ENCODE measurements at regions of chr11 and their contacts with region 1.

Region 1: GRCh38 chr11:116471608-116472256 is 301.1 kb downstream of the BUD13 start:
- DNase-seq: no peak
- H3K4me3 ChIP-seq: no peak overlapping the region
- H3K27ac ChIP-seq: no peak overlapping the region
- H3K4me1 ChIP-seq: peaks cover 2 to 8% (median 7%) of the 10 kb centered on the region in 4 experiments; a peak in 5 of 7 replicates
- H3K27me3 ChIP-seq: no peaks in the 10 kb centered on the region; a peak in 1 of 7 replicates
- CTCF ChIP-seq: no peak
- EP300 ChIP-seq: no peak
- POLR2A ChIP-seq: no peak
- RAD21 ChIP-seq: no peak

Region 2: GRCh38 chr11:116420770-116421528 is 50.8 kb before region 1 on chr11:
- CTCF ChIA-PET with region 1: no interaction called
- POLR2A ChIA-PET with region 1: no interaction called
- DNase-seq: no peak
- H3K4me3 ChIP-seq: no peak overlapping the region
- H3K27ac ChIP-seq: no peak overlapping the region
- H3K4me1 ChIP-seq: peaks cover 1 to 16% (median 7%) of the 10 kb centered on the region in 4 experiments; a peak in 5 of 7 replicates
- H3K27me3 ChIP-seq: no peaks in the 10 kb centered on the region
- CTCF ChIP-seq: no peak
- EP300 ChIP-seq: no peak
- POLR2A ChIP-seq: no peak
- RAD21 ChIP-seq: no peak

Region 3: DNA sequence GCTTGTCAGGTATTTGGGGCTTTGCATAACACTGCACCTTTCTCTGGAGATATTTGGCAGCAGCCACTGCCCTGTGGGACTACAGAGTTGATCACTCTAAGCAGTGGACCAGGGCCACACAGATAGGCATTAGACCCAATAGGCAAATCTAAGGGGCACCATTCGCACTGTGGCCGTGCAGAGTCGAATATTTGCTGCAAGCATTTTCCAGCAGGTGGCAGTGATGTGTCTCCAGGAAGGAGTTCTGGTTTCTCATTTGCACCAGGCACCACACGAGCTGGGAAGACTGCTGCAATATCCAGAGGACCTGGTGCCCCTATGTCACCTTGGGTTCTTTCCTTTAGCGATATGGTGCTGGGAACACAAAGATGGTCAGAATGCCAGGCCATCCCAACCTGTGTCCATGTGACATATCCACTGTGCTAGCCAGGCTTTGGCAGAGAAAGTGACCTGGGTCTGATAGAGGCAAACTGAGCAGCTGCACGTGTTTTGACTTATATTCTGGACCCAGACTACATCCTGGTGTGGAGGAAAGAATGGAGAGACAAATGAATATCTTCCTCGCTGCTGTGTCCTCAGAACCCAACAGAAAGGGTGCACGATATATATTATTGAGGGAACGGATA is 17.6 kb before region 1 on chr11:
- CTCF ChIA-PET with region 1: interaction called, 10 read pairs
- POLR2A ChIA-PET with region 1: no interaction called
- DNase-seq: peak in 1 of 2 experiments; percentile 78
- H3K4me3 ChIP-seq: no peak overlapping the region
- H3K27ac ChIP-seq: no peak overlapping the region
- H3K4me1 ChIP-seq: peaks cover 0 to 11% (median 1%) of the 10 kb centered on the region in 4 experiments; a peak in 3 of 7 replicates
- H3K27me3 ChIP-seq: no peaks in the 10 kb centered on the region
- CTCF ChIP-seq: peak; percentile 75 to 84 (median 81)
- EP300 ChIP-seq: no peak
- POLR2A ChIP-seq: no peak
- RAD21 ChIP-seq: peak; percentile 70 to 87

Measured in H1 (cell line).